Endothelial cell of umbilical vein (primary cell): ENCODE measurements at regions of chr1 and their contacts with region 1.

Region 1: GRCh38 chr1:150718225-150718891 is 2.3 kb downstream of the HORMAD1 start:
- DNase-seq: no peak
- H3K4me3 ChIP-seq: no peak overlapping the region
- H3K27ac ChIP-seq: no peak overlapping the region
- H3K4me1 ChIP-seq: no peaks in the 10 kb centered on the region
- H3K27me3 ChIP-seq: no peaks in the 10 kb centered on the region
- CTCF ChIP-seq: no peak
- POLR2A ChIP-seq: no peak

Region 2: GRCh38 chr1:150464422-150464826 is 253.9 kb before region 1 on chr1:
- CTCF ChIA-PET with region 1: no interaction called
- POLR2A ChIA-PET with region 1: no interaction called
- dilution Hi-C with region 1: no loop called
- intact Hi-C with region 1: no loop called
- DNase-seq: peak; percentile 71
- H3K4me3 ChIP-seq: no peak overlapping the region
- H3K27ac ChIP-seq: no peak overlapping the region
- H3K4me1 ChIP-seq: peaks cover 2% of the 10 kb centered on the region
- H3K27me3 ChIP-seq: no peaks in the 10 kb centered on the region
- CTCF ChIP-seq: peak; percentile 69 to 71
- POLR2A ChIP-seq: no peak

Region 3: DNA sequence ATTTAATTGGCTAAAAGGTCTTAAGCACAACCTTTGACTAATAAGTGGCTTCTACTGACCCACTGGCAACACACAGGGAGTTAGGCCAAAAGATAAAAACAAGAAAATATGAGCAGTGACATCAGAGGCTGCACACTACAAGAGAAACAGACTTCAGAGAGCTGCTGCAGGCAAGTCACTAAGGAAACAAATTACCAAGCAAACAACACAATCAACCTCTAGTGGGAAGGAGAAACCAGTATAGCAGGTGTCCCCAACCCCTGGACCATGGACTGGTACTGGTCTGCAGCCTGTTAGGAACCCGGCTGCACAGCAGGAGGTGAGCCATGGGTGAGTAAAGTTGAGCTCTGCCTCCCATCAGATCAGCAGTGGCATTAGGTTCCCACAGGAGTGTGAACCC is 68.2 kb before region 1 on chr1:
- CTCF ChIA-PET with region 1: no interaction called
- POLR2A ChIA-PET with region 1: no interaction called
- dilution Hi-C with region 1: no loop called
- intact Hi-C with region 1: loop called (anchors 10 kb)
- DNase-seq: no peak
- H3K4me3 ChIP-seq: no peak overlapping the region
- H3K27ac ChIP-seq: no peak overlapping the region
- H3K4me1 ChIP-seq: no peaks in the 10 kb centered on the region
- H3K27me3 ChIP-seq: no peaks in the 10 kb centered on the region
- CTCF ChIP-seq: no peak
- POLR2A ChIP-seq: no peak